CD8-positive, alpha-beta T cell (primary cell): ENCODE measurements at regions of chr21 and their contacts with region 1.

Region 1: DNA sequence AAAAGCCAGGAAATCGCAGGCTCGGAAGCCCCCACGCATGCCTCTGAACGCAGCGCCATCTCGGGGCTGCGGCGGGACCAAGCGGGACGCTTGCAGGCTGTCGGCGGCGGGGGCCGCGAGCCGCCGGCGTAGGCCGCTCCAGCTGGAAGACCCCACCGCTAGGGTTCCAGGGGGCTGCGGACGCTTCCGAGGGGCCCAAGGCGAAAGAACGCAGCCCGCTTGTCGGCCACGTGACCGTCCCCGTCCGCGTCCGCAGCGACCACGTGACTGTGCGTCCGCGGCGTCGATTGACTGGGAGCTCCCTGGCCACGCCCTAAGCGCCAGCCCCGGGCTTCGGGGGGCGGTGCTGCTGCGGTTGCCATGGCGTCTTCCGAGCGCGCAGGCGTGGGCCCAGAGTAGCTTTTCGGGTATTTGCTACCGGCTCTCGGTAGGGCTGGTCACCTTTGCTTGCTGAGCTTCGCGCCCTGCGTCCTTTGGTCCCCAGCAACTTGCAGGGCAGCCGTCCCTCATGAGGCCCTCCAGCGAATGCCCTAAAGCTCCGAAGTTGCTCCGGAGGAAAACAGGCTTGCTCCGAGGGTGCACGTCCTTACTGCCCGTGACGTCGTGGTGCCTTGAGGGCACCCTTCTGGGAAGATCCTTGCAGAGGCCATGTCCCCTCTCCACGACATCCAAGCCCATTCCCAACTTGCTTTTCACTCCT is 197.2 kb downstream of the DYRK1A start:
- DNase-seq: peak; percentile 82 to 97 (median 91)
- ATAC-seq: peak; percentile 76
- H3K4me3 ChIP-seq: peak overlapping the region; percentile 92 to 96
- H3K4me3 Mint-ChIP-seq: peak overlapping the region; percentile 99
- H3K27ac ChIP-seq: peak overlapping the region; percentile 97 to 99
- H3K27ac Mint-ChIP-seq: peak overlapping the region; percentile 100
- H3K4me1 ChIP-seq: peaks cover 15% of the 10 kb centered on the region
- H3K4me1 Mint-ChIP-seq: peaks cover 17% of the 10 kb centered on the region
- H3K27me3 ChIP-seq: no peaks in the 10 kb centered on the region
- H3K27me3 Mint-ChIP-seq: no peaks in the 10 kb centered on the region
- CTCF ChIP-seq: peak; percentile 63

Region 2: GRCh38 chr21:36989699-36990507 is 573.9 kb before region 1 on chr21:
- CTCF ChIA-PET with region 1: interaction called, 3 read pairs
- POLR2A ChIA-PET with region 1: no interaction called
- intact Hi-C with region 1: loop called in 1 of 2 experiments (anchors 1 kb)
- DNase-seq: peak; percentile 57 to 94 (median 82)
- ATAC-seq: peak; percentile 70
- H3K4me3 ChIP-seq: peak overlapping the region; percentile 59 to 63
- H3K4me3 Mint-ChIP-seq: peak overlapping the region; percentile 87
- H3K27ac ChIP-seq: peak overlapping the region; percentile 48 to 86
- H3K27ac Mint-ChIP-seq: peak overlapping the region; percentile 91
- H3K4me1 ChIP-seq: peaks cover 6% of the 10 kb centered on the region
- H3K4me1 Mint-ChIP-seq: peaks cover 22% of the 10 kb centered on the region
- H3K27me3 ChIP-seq: no peaks in the 10 kb centered on the region
- H3K27me3 Mint-ChIP-seq: no peaks in the 10 kb centered on the region
- CTCF ChIP-seq: peak; percentile 81

Region 3: GRCh38 chr21:37220981-37221664 is 342.7 kb before region 1 on chr21:
- CTCF ChIA-PET with region 1: interaction called, 4 read pairs
- POLR2A ChIA-PET with region 1: no interaction called
- intact Hi-C with region 1: loop called (anchors 1 kb)
- DNase-seq: peak; percentile 82 to 96 (median 95)
- ATAC-seq: peak; percentile 79
- H3K4me3 ChIP-seq: peak overlapping the region; percentile 92
- H3K4me3 Mint-ChIP-seq: peak overlapping the region; percentile 81
- H3K27ac ChIP-seq: peak overlapping the region; percentile 82
- H3K27ac Mint-ChIP-seq: peak overlapping the region; percentile 93
- H3K4me1 ChIP-seq: peaks cover 42% of the 10 kb centered on the region
- H3K4me1 Mint-ChIP-seq: peaks cover 50% of the 10 kb centered on the region
- H3K27me3 ChIP-seq: no peaks in the 10 kb centered on the region
- H3K27me3 Mint-ChIP-seq: no peaks in the 10 kb centered on the region
- CTCF ChIP-seq: peak; percentile 53

Region 4: GRCh38 chr21:37463083-37463801 is 100.5 kb before region 1 on chr21:
- CTCF ChIA-PET with region 1: no interaction called
- POLR2A ChIA-PET with region 1: interaction called, 3 read pairs
- intact Hi-C with region 1: loop called in 1 of 2 experiments (anchors 5 kb)
- DNase-seq: peak in 2 of 9 experiments; percentile 53 to 67
- ATAC-seq: peak; percentile 69
- H3K4me3 ChIP-seq: no peak overlapping the region
- H3K4me3 Mint-ChIP-seq: peak overlapping the region; percentile 30
- H3K27ac ChIP-seq: peak overlapping the region in 1 of 2 experiments; percentile 14
- H3K27ac Mint-ChIP-seq: peak overlapping the region; percentile 86
- H3K4me1 ChIP-seq: peaks cover 61% of the 10 kb centered on the region
- H3K4me1 Mint-ChIP-seq: peaks cover 88% of the 10 kb centered on the region
- H3K27me3 ChIP-seq: no peaks in the 10 kb centered on the region
- H3K27me3 Mint-ChIP-seq: no peaks in the 10 kb centered on the region
- CTCF ChIP-seq: peak; percentile 50

Region 5: DNA sequence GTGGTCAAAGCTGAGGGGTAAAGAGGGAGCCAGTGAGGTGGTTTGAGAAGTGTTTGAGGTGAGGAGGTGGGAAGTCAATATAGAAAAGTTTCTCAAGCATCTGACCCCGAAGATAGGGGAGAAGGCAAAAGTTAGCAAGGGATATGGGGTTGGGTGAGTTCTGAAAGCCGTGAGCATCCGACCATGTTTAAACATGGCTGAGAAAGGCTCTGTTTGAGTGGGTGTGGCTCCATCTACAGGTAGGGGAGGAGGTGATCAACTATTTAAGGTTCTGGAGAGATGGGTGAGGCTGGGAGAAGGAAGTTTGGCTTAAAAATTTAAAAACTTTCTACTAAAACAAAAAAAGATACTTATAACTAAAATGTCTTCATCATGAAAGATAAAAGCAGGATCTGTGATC is 78.7 kb after region 1 on chr21:
- CTCF ChIA-PET with region 1: no interaction called
- POLR2A ChIA-PET with region 1: no interaction called
- intact Hi-C with region 1: loop called in 1 of 2 experiments (anchors 10 kb)
- DNase-seq: peak in 6 of 9 experiments; percentile 3 to 56 (median 31)
- ATAC-seq: peak; percentile 49
- H3K4me3 ChIP-seq: no peak overlapping the region
- H3K4me3 Mint-ChIP-seq: no peak overlapping the region
- H3K27ac ChIP-seq: no peak overlapping the region
- H3K27ac Mint-ChIP-seq: no peak overlapping the region
- H3K4me1 ChIP-seq: no peaks in the 10 kb centered on the region
- H3K4me1 Mint-ChIP-seq: no peaks in the 10 kb centered on the region
- H3K27me3 ChIP-seq: no peaks in the 10 kb centered on the region
- H3K27me3 Mint-ChIP-seq: peaks cover 47% of the 10 kb centered on the region
- CTCF ChIP-seq: peak; percentile 22

Region 6: DNA sequence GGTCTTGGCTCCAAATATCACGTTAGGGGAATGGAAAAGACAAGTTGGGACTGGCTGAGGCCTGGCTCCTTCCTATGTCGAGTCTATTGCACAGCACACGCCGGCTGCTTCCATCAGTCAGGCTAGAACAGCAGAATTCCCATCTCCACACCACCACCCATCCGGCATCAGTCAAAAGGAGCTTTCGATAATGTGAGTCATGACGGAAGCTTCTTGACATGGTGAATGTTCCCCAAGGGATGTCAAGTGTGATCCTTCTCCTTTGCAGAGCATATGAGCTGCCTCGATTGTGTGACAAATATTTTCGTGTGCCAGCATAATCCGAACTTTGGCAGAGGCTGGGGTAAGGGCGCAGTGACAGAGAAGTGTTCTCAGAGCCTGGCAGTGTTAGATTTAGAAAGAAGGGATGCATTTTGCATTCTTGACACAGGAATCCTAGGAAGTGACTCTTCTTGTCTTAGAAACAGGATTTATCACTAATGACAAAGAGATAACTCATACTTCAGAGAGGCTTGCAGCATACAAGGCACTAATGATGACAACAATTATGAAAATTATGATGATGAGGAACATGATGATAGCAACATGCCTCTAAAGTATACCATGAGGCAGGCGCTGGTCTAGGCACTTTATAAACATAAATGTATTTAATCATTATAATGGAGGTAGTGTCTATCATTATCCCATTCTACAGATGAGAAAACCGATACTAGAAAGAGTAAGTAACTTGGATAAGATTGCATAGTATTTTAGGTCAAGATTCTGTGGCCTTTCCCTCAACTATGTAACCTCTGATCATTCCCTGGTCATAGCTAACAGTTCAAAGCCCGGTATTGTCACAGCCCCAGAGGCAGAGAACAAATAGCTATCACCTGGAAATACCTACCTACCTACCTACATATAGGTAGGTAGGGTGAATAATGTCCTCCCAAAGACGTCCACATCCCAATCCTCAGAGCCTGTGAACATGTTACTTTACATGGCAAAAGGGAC is 217.5 kb after region 1 on chr21:
- CTCF ChIA-PET with region 1: no interaction called
- POLR2A ChIA-PET with region 1: no interaction called
- intact Hi-C with region 1: no loop called
- DNase-seq: no peak
- ATAC-seq: no peak
- H3K4me3 ChIP-seq: no peak overlapping the region
- H3K4me3 Mint-ChIP-seq: no peak overlapping the region
- H3K27ac ChIP-seq: no peak overlapping the region
- H3K27ac Mint-ChIP-seq: no peak overlapping the region
- H3K4me1 ChIP-seq: no peaks in the 10 kb centered on the region
- H3K4me1 Mint-ChIP-seq: no peaks in the 10 kb centered on the region
- H3K27me3 ChIP-seq: no peaks in the 10 kb centered on the region
- H3K27me3 Mint-ChIP-seq: peaks cover 13% of the 10 kb centered on the region
- CTCF ChIP-seq: no peak